Tibial artery (tissue), 4 donors: ENCODE measurements at regions of chr11 and their contacts with region 1.

Region 1: GRCh38 chr11:101166038-101166437 is 36.4 kb upstream of the PGR start:
- DNase-seq: no peak
- H3K4me3 ChIP-seq: no peak overlapping the region
- H3K27ac ChIP-seq: no peak overlapping the region
- H3K4me1 ChIP-seq: peaks cover 0 to 4% (median 0%) of the 10 kb centered on the region in 4 donors
- H3K27me3 ChIP-seq: no peaks in the 10 kb centered on the region
- CTCF ChIP-seq: no peak

Region 2: DNA sequence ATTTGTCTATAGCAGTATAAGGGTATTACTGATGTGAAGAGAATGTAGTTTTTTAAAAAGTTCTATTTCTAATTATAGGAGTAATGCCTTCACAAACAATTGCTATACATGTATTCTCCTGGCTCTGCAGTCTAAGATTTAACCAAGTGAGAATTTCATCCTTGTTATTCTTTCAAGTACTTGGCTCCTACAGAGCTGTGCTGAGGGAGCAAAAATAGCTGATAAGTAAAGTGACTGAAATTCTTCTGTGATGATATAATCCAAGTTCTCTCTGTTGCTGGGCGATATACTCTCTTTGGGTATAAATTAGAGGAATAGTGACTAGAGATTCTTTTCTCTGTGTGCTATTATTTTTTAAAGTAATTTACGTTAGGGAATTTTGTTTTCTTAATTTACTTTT is 104.4 kb before region 1 on chr11:
- intact Hi-C with region 1: no loop called
- DNase-seq: no peak
- H3K4me3 ChIP-seq: no peak overlapping the region
- H3K27ac ChIP-seq: peak overlapping the region in 1 of 2 donors; percentile 7
- H3K4me1 ChIP-seq: peaks cover 0 to 66% (median 2%) of the 10 kb centered on the region in 4 donors
- H3K27me3 ChIP-seq: no peaks in the 10 kb centered on the region
- CTCF ChIP-seq: no peak

Region 3: DNA sequence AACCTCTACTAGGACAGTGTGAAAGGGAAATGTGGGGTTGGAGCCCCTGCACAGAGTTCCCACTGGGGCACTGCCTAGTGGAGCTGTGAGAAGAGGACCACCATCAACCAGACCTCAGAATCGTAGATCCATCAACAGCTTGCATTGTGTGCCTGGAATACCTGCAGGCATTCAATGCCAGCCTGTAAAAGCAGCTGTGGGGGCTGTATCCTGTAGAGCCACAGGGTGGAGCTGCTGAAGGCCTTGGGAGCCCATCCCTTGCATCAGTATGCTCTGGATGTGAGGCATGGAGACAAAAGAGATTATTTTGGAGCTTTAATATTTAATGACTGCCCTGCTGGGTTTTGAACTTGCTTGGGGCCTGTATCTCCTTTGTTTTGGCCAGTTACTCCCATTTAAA is 82.7 kb before region 1 on chr11:
- intact Hi-C with region 1: loop called (anchors 2 kb)
- DNase-seq: no peak
- H3K4me3 ChIP-seq: no peak overlapping the region
- H3K27ac ChIP-seq: no peak overlapping the region
- H3K4me1 ChIP-seq: peaks cover 0 to 23% (median 0%) of the 10 kb centered on the region in 4 donors
- H3K27me3 ChIP-seq: no peaks in the 10 kb centered on the region
- CTCF ChIP-seq: no peak